Psoas muscle (tissue), 8 donors: ENCODE measurements at regions of chr1 and their contacts with region 1.

Region 1: DNA sequence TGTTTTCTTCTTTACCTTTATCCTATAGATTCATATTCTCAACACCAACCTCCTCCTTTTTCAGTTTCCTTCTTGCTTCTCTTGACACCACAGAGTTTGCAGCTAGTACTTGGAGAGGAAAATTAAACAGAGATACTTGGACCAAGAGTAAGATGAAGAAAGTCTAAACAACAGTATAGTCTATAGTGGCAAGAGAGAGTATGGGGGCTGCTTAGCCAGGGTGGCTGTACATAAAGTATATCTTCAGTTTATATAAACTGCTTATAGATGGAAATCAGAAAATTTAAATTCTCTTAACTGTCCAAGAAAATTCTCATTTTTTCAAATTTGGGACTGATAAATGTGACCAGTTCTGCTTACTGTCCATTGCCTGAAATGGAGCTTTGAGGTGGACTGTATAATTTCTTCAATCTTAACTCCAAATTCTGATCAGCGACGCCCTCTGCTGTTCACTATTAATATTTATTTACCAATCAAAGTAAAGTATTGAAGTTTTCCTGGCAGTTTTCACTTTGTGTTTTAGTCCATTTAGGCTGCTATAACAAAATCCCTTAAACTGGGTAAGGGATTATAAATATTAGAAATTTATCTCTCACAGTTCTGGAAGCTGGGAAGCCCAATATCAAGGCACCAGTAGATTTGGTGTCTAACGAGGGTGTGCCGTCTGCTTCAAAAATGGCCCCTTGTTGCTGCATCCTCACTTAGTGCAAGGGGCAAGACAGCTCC is 14.8 kb upstream of the METTL18 start:
- DNase-seq: no peak
- ATAC-seq: no peak
- H3K4me3 ChIP-seq: no peak overlapping the region
- H3K27ac ChIP-seq: no peak overlapping the region
- H3K4me1 ChIP-seq: no peaks in the 10 kb centered on the region
- H3K27me3 ChIP-seq: no peaks in the 10 kb centered on the region
- CTCF ChIP-seq: peak; percentile 52

Region 2: DNA sequence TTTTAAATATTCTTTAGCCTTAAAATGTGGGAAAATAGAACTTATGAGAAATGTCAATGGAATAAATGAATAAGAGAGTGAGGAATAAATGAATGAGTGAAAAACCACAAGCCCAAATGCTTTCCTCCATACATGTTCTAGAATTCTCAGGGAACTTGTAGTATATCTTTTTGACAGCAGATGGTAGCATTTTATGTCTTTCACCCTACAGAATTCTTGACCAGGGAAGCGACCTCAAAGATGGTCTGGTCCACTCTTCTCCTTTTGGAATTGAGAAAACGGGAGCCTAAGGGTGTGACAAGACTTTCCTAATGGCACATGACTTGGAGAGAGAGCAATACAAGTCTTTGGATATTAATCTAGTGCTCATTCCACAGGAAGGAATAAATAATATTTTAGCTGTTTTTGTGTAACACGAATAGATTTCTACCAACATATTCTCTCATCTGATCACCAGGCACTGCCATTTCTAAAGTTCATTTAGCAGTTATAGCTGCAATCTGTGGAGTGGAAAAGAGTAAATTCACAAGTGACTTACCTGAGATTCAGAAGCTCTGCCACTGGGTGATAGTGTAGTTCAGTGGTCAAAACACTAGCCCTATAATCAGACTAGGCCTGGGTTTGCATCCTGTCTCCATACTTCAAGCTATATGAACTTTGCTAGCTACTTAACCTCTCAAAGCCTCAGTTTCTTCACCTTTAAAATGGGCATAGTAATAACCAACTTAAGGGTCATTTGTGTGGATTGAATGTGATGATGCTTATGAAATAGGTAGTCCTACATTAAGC is 208.2 kb before region 1 on chr1:
- intact Hi-C with region 1: loop called in 1 of 2 experiments (anchors 10 kb)
- DNase-seq: no peak
- ATAC-seq: no peak
- H3K4me3 ChIP-seq: no peak overlapping the region
- H3K27ac ChIP-seq: no peak overlapping the region
- H3K4me1 ChIP-seq: no peaks in the 10 kb centered on the region
- H3K27me3 ChIP-seq: peaks cover 0 to 5% (median 0%) of the 10 kb centered on the region in 3 donors
- CTCF ChIP-seq: peak; percentile 25

Region 3: GRCh38 chr1:169776440-169776839 is 33.1 kb before region 1 on chr1:
- intact Hi-C with region 1: loop called in 1 of 2 experiments (anchors 2 kb)
- DNase-seq: no peak
- ATAC-seq: no peak
- H3K4me3 ChIP-seq: no peak overlapping the region
- H3K27ac ChIP-seq: no peak overlapping the region
- H3K4me1 ChIP-seq: no peaks in the 10 kb centered on the region
- H3K27me3 ChIP-seq: no peaks in the 10 kb centered on the region
- CTCF ChIP-seq: no peak

Region 4: GRCh38 chr1:169949139-169949538 is 139.6 kb after region 1 on chr1:
- intact Hi-C with region 1: no loop called
- DNase-seq: no peak
- ATAC-seq: no peak
- H3K4me3 ChIP-seq: no peak overlapping the region
- H3K27ac ChIP-seq: no peak overlapping the region
- H3K4me1 ChIP-seq: no peaks in the 10 kb centered on the region
- H3K27me3 ChIP-seq: no peaks in the 10 kb centered on the region
- CTCF ChIP-seq: no peak